ENCODE measurements at regions of chr19 and their contacts with region 1.

Region 1: GRCh38 chr19:623175-623916 is 10.0 kb downstream of the POLRMT start:
- DNase-seq: no peak
- H3K4me3 ChIP-seq: no peak overlapping the region
- H3K4me3 Mint-ChIP-seq: peak overlapping the region in 1 of 7 donors; percentile 5
- H3K27ac ChIP-seq: no peak overlapping the region
- H3K27ac Mint-ChIP-seq: no peak overlapping the region
- H3K4me1 ChIP-seq: no peaks in the 10 kb centered on the region
- H3K4me1 Mint-ChIP-seq: peaks cover 3 to 11% (median 4%) of the 10 kb centered on the region in 3 donors
- H3K27me3 ChIP-seq: no peaks in the 10 kb centered on the region
- H3K27me3 Mint-ChIP-seq: no peaks in the 10 kb centered on the region

Region 2: DNA sequence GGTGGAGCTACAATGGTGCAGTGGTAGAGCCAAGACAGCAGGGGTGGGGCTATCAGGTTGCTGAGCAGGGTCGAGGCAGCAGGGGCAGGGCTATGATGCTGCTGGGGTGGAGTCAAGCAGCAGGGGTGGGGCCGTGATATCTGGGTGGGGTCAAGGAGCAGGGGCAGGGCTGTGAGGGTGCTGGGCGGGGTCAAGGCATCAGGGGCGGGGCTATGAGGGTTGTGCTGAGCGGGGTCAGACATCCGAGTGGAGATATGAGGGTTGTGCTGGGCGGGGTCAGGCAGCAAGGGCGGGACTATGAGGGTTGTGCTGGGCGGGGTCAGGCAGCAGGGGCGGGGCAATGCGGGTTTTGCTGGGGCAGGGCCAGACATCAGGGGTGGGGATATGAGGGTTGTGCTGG is 19.0 kb before region 1 on chr19:
- CTCF ChIA-PET with region 1: no interaction called
- POLR2A ChIA-PET with region 1: no interaction called
- DNase-seq: peak in 2 of 5 donors; percentile 24 to 27
- H3K4me3 ChIP-seq: no peak overlapping the region
- H3K4me3 Mint-ChIP-seq: no peak overlapping the region
- H3K27ac ChIP-seq: no peak overlapping the region
- H3K27ac Mint-ChIP-seq: peak overlapping the region in 1 of 8 donors; percentile 70
- H3K4me1 ChIP-seq: peaks cover under 1% of the 10 kb centered on the region
- H3K4me1 Mint-ChIP-seq: no peaks in the 10 kb centered on the region
- H3K27me3 ChIP-seq: no peaks in the 10 kb centered on the region
- H3K27me3 Mint-ChIP-seq: no peaks in the 10 kb centered on the region

Region 3: GRCh38 chr19:651114-651740 is 27.9 kb after region 1 on chr19:
- CTCF ChIA-PET with region 1: no interaction called
- POLR2A ChIA-PET with region 1: interaction called, 10 read pairs
- DNase-seq: peak in 1 of 5 donors; percentile 42
- H3K4me3 ChIP-seq: no peak overlapping the region
- H3K4me3 Mint-ChIP-seq: no peak overlapping the region
- H3K27ac ChIP-seq: no peak overlapping the region
- H3K27ac Mint-ChIP-seq: peak overlapping the region in 1 of 8 donors; percentile 50
- H3K4me1 ChIP-seq: peaks cover 14% of the 10 kb centered on the region
- H3K4me1 Mint-ChIP-seq: peaks cover 15 to 32% (median 19%) of the 10 kb centered on the region in 3 donors
- H3K27me3 ChIP-seq: no peaks in the 10 kb centered on the region
- H3K27me3 Mint-ChIP-seq: no peaks in the 10 kb centered on the region